Endothelial cell of umbilical vein (primary cell): ENCODE measurements at regions of chr14 and their contacts with region 1.

Region 1: DNA sequence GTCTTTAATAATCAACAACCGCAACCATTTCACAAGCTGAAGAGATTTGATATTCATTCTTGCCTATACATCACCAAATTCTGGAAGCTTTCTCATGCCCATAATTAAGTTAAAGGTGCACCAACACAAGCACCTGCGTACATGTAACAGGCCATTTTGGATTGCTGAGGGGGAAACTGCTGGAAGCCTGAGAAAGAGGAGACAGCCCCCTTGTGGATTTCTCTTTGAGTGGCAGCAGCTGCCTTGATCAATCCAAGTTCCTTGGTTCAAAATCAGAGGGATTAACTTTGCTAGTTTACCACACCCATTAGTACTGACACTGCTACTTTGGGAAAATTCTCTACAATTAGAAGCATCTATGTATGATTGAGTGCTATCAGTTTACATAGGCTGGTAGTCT is 321.1 kb downstream of the NOVA1 start:
- DNase-seq: peak; percentile 31
- H3K4me3 ChIP-seq: no peak overlapping the region
- H3K27ac ChIP-seq: no peak overlapping the region
- H3K4me1 ChIP-seq: no peaks in the 10 kb centered on the region
- H3K27me3 ChIP-seq: no peaks in the 10 kb centered on the region
- CTCF ChIP-seq: peak; percentile 38 to 54
- POLR2A ChIP-seq: no peak

Region 2: GRCh38 chr14:25833341-25834126 is 443.2 kb before region 1 on chr14:
- CTCF ChIA-PET with region 1: interaction called, 13 read pairs
- POLR2A ChIA-PET with region 1: no interaction called
- dilution Hi-C with region 1: no loop called
- intact Hi-C with region 1: loop called (anchors 2 kb)
- DNase-seq: peak; percentile 46
- H3K4me3 ChIP-seq: no peak overlapping the region
- H3K27ac ChIP-seq: no peak overlapping the region
- H3K4me1 ChIP-seq: no peaks in the 10 kb centered on the region
- H3K27me3 ChIP-seq: no peaks in the 10 kb centered on the region
- CTCF ChIP-seq: peak; percentile 52 to 55
- POLR2A ChIP-seq: no peak

Region 3: GRCh38 chr14:26163791-26164190 is 113.0 kb before region 1 on chr14:
- CTCF ChIA-PET with region 1: interaction called, 15 read pairs
- POLR2A ChIA-PET with region 1: no interaction called
- dilution Hi-C with region 1: no loop called
- intact Hi-C with region 1: loop called (anchors 2 kb)
- DNase-seq: peak; percentile 33
- H3K4me3 ChIP-seq: no peak overlapping the region
- H3K27ac ChIP-seq: no peak overlapping the region
- H3K4me1 ChIP-seq: no peaks in the 10 kb centered on the region
- H3K27me3 ChIP-seq: no peaks in the 10 kb centered on the region
- CTCF ChIP-seq: peak; percentile 9 to 49
- POLR2A ChIP-seq: no peak